Vagina (tissue), 2 donors: ENCODE measurements at regions of chr19 and their contacts with region 1.

Region 1: GRCh38 chr19:52511748-52512147 is 15.7 kb upstream of the ZNF808 start:
- DNase-seq: no peak
- H3K4me3 ChIP-seq: no peak overlapping the region
- H3K27ac ChIP-seq: no peak overlapping the region
- H3K4me1 ChIP-seq: no peaks in the 10 kb centered on the region
- H3K27me3 ChIP-seq: no peaks in the 10 kb centered on the region
- CTCF ChIP-seq: no peak
- POLR2A ChIP-seq: no peak

Region 2: DNA sequence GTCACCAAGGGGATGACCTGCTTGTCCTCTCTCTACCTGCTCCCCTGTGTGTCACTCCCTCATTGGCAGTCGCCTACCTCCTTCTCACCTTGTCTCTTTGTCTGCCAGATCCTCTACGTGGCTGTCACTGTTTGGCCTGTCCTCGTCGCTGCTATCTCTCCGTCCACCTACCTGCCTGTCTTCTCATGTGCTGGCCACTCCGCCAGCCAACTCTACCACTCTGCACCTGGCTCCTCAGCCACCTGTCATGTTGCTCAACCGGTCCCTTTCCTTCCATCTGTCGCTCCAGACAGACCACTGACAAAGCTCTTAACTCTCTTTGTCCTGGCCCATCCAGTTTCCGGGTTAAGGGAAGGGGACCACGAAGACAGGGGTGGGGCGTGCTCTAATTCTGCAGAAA is 1477.0 kb before region 1 on chr19 and contains the start of gene KLK12:
- intact Hi-C with region 1: loop called (anchors 5 kb)
- DNase-seq: no peak
- H3K4me3 ChIP-seq: peak within 1 kb of the TSS in 1 of 2 donors; percentile 14
- H3K27ac ChIP-seq: peak within 1 kb of the TSS; percentile 24
- H3K4me1 ChIP-seq: no peaks in the 10 kb centered on the region
- H3K27me3 ChIP-seq: no peaks in the 10 kb centered on the region
- CTCF ChIP-seq: no peak
- POLR2A ChIP-seq: no peak
- total RNA-seq, gene KLK12: 4.2 TPM